MCF 10A (cell line): ENCODE measurements at regions of chr12 and their contacts with region 1.

Region 1: GRCh38 chr12:57983146-57983857 is 41.9 kb downstream of the ATP23 start:
- DNase-seq: peak; percentile 65
- H3K4me3 Mint-ChIP-seq: no peak overlapping the region
- H3K27ac Mint-ChIP-seq: no peak overlapping the region
- H3K4me1 Mint-ChIP-seq: peaks cover 6% of the 10 kb centered on the region
- H3K27me3 Mint-ChIP-seq: no peaks in the 10 kb centered on the region
- CTCF ChIP-seq: peak; percentile 72

Region 2: GRCh38 chr12:57935839-57936512 is 47.3 kb before region 1 on chr12:
- CTCF ChIA-PET with region 1: no interaction called
- POLR2A ChIA-PET with region 1: no interaction called
- intact Hi-C with region 1: no loop called
- DNase-seq: peak; percentile 93
- H3K4me3 Mint-ChIP-seq: peak overlapping the region; percentile 88
- H3K27ac Mint-ChIP-seq: peak overlapping the region; percentile 99
- H3K4me1 Mint-ChIP-seq: peaks cover 18% of the 10 kb centered on the region
- H3K27me3 Mint-ChIP-seq: no peaks in the 10 kb centered on the region
- CTCF ChIP-seq: no peak

Region 3: GRCh38 chr12:58443273-58443980 is 460.1 kb after region 1 on chr12:
- CTCF ChIA-PET with region 1: no interaction called
- POLR2A ChIA-PET with region 1: no interaction called
- intact Hi-C with region 1: loop called (anchors 5 kb)
- DNase-seq: peak; percentile 58
- H3K4me3 Mint-ChIP-seq: no peak overlapping the region
- H3K27ac Mint-ChIP-seq: no peak overlapping the region
- H3K4me1 Mint-ChIP-seq: no peaks in the 10 kb centered on the region
- H3K27me3 Mint-ChIP-seq: no peaks in the 10 kb centered on the region
- CTCF ChIP-seq: peak; percentile 51

Region 4: DNA sequence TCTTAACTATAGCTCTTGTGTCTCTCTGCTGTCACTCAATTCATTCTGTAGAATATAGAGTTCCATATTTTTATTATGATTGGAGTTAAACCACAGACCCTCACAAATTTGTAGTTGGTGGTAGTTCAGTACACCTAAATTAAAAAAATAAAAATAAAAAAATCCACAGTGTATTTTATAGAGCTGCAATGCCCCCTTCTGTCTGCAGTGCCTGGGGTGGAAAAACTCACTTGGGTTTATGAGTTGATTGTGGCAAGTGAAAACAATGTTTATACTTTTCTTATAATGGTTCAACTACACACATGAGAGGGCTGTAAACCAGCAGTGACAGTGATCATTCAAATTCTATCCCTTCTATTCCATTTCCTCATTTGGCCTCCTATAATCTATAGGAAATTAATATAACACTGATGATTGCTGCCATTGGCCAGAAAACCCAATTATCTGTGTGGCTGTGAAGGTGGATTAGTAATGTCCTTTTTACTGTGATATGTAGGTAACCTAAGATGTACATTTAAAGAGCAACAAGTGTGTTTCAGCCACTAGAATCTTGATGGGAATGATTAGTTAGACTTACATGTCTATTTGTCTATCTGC is 1103.9 kb after region 1 on chr12:
- CTCF ChIA-PET with region 1: no interaction called
- POLR2A ChIA-PET with region 1: no interaction called
- intact Hi-C with region 1: loop called (anchors 1 kb)
- DNase-seq: peak; percentile 37
- H3K4me3 Mint-ChIP-seq: no peak overlapping the region
- H3K27ac Mint-ChIP-seq: no peak overlapping the region
- H3K4me1 Mint-ChIP-seq: peaks cover 33% of the 10 kb centered on the region
- H3K27me3 Mint-ChIP-seq: no peaks in the 10 kb centered on the region
- CTCF ChIP-seq: peak; percentile 79

Region 5: DNA sequence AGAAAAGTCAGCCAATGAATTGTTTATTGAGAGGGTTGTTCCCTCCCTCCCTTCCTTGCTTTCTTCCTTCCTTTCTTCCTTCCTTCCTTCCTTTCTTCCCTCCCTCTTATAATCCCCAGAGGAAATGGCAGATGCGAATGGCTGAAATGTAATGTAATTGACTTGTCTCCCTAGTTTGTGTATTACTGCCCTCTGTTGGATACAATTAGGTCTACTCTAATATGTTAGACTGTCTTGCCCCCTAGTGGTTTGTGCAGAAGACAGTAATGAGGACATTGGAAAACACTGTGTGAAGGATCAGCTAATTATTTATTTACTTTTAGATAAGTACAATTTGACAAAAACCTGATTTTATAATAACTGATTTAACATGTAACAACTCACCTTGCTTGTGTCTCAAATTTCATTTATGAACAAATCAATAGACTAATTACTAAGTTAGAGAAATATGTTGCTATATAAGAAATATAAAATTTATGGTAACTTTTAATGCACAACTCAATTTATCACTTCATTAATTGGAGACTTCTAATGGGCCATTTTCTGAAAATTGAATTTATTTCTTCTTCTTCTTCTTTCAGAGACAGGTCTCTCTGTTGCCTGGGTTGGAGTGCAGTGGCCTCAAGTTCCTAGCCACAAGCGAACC is 1166.8 kb after region 1 on chr12:
- CTCF ChIA-PET with region 1: no interaction called
- POLR2A ChIA-PET with region 1: no interaction called
- intact Hi-C with region 1: loop called (anchors 2 kb)
- DNase-seq: peak; percentile 84
- H3K4me3 Mint-ChIP-seq: no peak overlapping the region
- H3K27ac Mint-ChIP-seq: no peak overlapping the region
- H3K4me1 Mint-ChIP-seq: peaks cover 11% of the 10 kb centered on the region
- H3K27me3 Mint-ChIP-seq: no peaks in the 10 kb centered on the region
- CTCF ChIP-seq: peak; percentile 91

Region 6: GRCh38 chr12:59164991-59165718 is 1181.9 kb after region 1 on chr12:
- CTCF ChIA-PET with region 1: no interaction called
- POLR2A ChIA-PET with region 1: no interaction called
- intact Hi-C with region 1: loop called (anchors 5 kb)
- DNase-seq: peak; percentile 56
- H3K4me3 Mint-ChIP-seq: no peak overlapping the region
- H3K27ac Mint-ChIP-seq: no peak overlapping the region
- H3K4me1 Mint-ChIP-seq: no peaks in the 10 kb centered on the region
- H3K27me3 Mint-ChIP-seq: no peaks in the 10 kb centered on the region
- CTCF ChIP-seq: peak; percentile 23